ENCODE measurements at regions of chr9 and their contacts with region 1.

Region 1: DNA sequence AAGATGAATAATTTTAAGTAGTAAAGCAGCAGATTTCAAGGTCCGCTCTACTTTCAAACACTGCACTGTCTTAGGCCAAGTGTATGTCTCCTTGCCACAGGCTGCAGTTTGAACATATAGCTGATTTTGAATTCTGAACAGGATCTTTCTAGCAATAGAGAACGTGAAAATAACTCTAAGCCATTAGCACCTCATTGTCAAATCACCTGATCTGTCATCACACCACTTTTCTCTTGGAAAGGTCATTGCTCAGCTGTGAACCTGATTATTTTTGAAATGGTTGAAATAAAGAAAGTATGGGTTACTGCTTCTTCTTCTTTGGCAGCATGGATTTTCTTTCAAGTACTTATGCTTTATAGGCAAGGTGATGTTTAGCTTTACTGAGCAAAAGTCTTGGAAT is 357.0 kb upstream of the RORB start:
- DNase-seq: no peak
- ATAC-seq: no peak
- H3K4me3 ChIP-seq: no peak overlapping the region
- H3K27ac ChIP-seq: no peak overlapping the region
- H3K4me1 ChIP-seq: no peaks in the 10 kb centered on the region
- H3K27me3 ChIP-seq: no peaks in the 10 kb centered on the region
- CTCF ChIP-seq: no peak
- POLR2A ChIP-seq: no peak

Region 2: GRCh38 chr9:73649552-73649951 is 490.6 kb before region 1 on chr9:
- intact Hi-C with region 1: loop called in 1 of 10 experiments (anchors 5 kb)
- DNase-seq: no peak
- ATAC-seq: no peak
- H3K4me3 ChIP-seq: no peak overlapping the region
- H3K27ac ChIP-seq: no peak overlapping the region
- H3K4me1 ChIP-seq: no peaks in the 10 kb centered on the region
- H3K27me3 ChIP-seq: no peaks in the 10 kb centered on the region
- CTCF ChIP-seq: no peak
- POLR2A ChIP-seq: no peak

Measured in heart left ventricle (tissue), 16 donors.